ENCODE measurements at regions of chr6 and their contacts with region 1.

Region 1: GRCh38 chr6:84601366-84601765 is 163.0 kb downstream of the TBX18 start:
- DNase-seq: no peak
- ATAC-seq: no peak
- H3K4me3 ChIP-seq: no peak overlapping the region
- H3K4me3 Mint-ChIP-seq: no peak overlapping the region
- H3K27ac ChIP-seq: no peak overlapping the region
- H3K27ac Mint-ChIP-seq: no peak overlapping the region
- H3K4me1 ChIP-seq: no peaks in the 10 kb centered on the region
- H3K4me1 Mint-ChIP-seq: no peaks in the 10 kb centered on the region
- H3K27me3 ChIP-seq: no peaks in the 10 kb centered on the region
- H3K27me3 Mint-ChIP-seq: no peaks in the 10 kb centered on the region

Region 2: DNA sequence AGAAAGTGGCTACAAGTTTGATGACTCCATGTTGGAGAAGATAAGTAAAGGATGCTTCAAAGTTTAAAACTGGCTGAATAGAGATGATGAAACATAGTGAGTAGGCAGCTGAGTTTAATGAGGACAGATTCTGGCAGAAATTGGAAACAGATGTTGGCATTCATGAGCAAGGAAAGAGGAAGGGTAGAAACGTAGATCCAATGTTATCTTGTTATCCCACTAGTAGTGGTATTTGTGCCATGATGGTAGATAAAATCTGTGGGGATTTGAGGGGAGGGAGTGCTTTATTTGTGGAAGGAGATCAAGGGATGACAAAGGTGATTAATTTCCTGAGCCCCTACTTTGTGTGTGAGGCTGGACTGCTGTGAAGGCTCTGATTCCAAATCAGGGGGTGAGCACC is 498.3 kb before region 1 on chr6:
- CTCF ChIA-PET with region 1: no interaction called
- POLR2A ChIA-PET with region 1: no interaction called
- intact Hi-C with region 1: no loop called
- DNase-seq: no peak
- ATAC-seq: no peak
- H3K4me3 ChIP-seq: no peak overlapping the region
- H3K4me3 Mint-ChIP-seq: no peak overlapping the region
- H3K27ac ChIP-seq: no peak overlapping the region
- H3K27ac Mint-ChIP-seq: no peak overlapping the region
- H3K4me1 ChIP-seq: no peaks in the 10 kb centered on the region
- H3K4me1 Mint-ChIP-seq: no peaks in the 10 kb centered on the region
- H3K27me3 ChIP-seq: no peaks in the 10 kb centered on the region
- H3K27me3 Mint-ChIP-seq: peaks cover 0 to 33% (median 21%) of the 10 kb centered on the region in 5 donors

Region 3: GRCh38 chr6:84581494-84582259 is 19.7 kb before region 1 on chr6:
- CTCF ChIA-PET with region 1: no interaction called
- POLR2A ChIA-PET with region 1: no interaction called
- intact Hi-C with region 1: loop called in 1 of 2 experiments (anchors 1 kb)
- DNase-seq: no peak
- ATAC-seq: no peak
- H3K4me3 ChIP-seq: no peak overlapping the region
- H3K4me3 Mint-ChIP-seq: no peak overlapping the region
- H3K27ac ChIP-seq: no peak overlapping the region
- H3K27ac Mint-ChIP-seq: no peak overlapping the region
- H3K4me1 ChIP-seq: no peaks in the 10 kb centered on the region
- H3K4me1 Mint-ChIP-seq: no peaks in the 10 kb centered on the region
- H3K27me3 ChIP-seq: no peaks in the 10 kb centered on the region
- H3K27me3 Mint-ChIP-seq: no peaks in the 10 kb centered on the region

Region 4: DNA sequence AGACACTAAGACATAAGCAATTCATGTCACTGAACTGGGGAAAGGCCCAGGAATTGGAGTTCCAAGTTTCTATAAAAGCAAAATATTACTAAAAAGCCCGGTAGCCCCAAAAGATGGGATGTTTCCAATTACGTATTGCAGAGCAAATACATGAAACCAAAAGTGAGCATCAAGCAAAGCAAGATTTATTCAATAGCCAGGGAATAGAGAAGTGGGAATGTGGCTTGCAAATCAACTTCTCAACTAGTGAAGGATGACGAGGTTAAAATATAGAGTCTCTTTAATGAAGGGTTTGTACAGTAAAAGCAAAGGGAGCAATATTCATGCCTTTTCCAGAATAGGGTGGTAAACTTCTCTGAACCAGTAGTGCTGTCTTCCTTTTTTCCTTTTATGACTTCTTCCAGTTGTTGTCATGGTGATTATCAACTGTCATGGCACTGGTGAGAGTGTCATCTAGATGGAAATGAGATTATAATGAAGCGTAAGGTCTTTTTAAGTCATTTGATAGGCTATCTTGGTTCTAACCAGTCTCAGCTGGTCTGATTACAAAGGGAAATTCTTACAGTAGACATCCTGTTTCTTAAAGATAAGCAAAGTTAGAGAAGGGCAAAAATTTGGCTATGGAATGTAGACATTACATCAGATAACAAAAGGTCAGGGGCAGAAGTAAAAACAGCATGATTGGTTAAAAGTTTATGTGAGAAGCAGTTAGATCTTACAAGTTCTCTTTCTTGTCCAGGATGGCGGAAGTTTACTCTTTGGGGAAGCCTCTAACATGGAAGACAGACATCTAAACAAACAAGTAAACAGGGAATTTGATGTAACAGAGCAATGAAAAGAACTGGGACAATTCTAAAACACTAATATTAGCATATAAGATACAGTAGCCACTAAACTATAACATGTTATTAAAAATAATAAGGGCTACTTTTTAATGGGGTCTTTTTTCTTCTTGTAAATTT is 66.2 kb after region 1 on chr6:
- CTCF ChIA-PET with region 1: no interaction called
- POLR2A ChIA-PET with region 1: no interaction called
- intact Hi-C with region 1: no loop called
- DNase-seq: no peak
- ATAC-seq: no peak
- H3K4me3 ChIP-seq: no peak overlapping the region
- H3K4me3 Mint-ChIP-seq: no peak overlapping the region
- H3K27ac ChIP-seq: no peak overlapping the region
- H3K27ac Mint-ChIP-seq: no peak overlapping the region
- H3K4me1 ChIP-seq: no peaks in the 10 kb centered on the region
- H3K4me1 Mint-ChIP-seq: no peaks in the 10 kb centered on the region
- H3K27me3 ChIP-seq: no peaks in the 10 kb centered on the region
- H3K27me3 Mint-ChIP-seq: no peaks in the 10 kb centered on the region